Panc1 (cell line): ENCODE measurements at regions of chr3 and their contacts with region 1.

Region 1: DNA sequence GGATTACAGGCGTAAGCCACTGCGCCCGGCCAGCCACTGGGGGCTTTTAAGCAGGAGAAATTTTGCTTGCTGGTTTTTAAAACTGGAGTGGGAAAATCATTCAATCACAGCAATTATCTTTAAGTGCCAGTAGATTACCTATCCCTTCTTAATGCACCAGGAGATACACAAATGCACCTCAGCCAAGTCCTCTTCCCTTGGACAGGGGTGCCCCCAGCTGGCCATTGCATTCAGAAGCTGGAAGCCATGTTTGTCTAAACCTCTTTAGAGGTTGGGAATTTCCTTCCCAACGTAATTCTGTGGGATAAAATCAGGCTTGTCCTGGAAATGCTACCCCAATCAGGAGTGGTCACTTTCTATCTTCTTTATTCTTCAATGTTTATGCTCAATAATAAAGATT is 26.6 kb downstream of the MIX23 start:
- DNase-seq: peak; percentile 28
- ATAC-seq: peak; percentile 85
- H3K4me3 ChIP-seq: no peak overlapping the region
- H3K27ac ChIP-seq: no peak overlapping the region
- H3K4me1 ChIP-seq: no peaks in the 10 kb centered on the region
- H3K27me3 ChIP-seq: no peaks in the 10 kb centered on the region
- CTCF ChIP-seq: peak; percentile 80

Region 2: DNA sequence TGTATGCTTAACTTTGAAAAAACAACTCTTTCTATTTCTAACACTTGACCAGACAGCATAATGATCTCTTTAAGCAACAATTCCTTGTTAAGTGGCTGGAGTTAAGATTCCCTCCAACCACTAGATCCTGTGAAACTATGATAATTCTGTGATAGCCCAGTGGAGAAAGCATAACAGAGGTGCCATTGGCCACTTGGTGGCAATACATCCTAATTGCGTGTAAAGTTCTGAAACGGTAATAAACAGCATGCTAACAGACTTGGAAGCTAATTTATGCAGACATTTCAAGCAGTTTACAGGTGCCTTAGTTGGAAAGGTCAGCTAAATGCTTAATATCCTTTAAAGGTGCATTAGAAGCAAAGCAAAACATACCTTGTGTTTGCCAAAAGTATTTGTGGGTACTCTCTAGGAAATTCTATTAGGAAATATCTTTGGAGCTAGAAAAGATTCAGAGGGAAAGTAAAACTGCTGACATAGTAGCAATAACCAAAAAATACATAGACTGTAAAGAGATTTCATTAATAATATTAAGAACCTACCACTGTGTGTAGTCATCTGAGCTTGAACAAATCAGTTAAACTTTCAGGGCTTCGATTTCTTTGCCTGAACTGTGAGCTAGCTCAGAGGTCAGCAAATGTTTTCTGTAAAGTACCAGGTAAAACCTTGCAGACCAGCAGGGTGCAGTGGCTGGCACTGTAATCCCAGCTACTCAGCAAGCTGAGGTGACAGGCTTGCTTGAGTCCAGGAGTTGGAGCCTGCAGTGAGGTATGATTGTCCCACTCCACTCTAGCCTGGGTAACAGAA is 50.4 kb before region 1 on chr3:
- CTCF ChIA-PET with region 1: interaction called, 9 read pairs
- POLR2A ChIA-PET with region 1: no interaction called
- in situ Hi-C with region 1: no loop called
- intact Hi-C with region 1: loop called (anchors 2 kb)
- DNase-seq: peak; percentile 15
- ATAC-seq: peak; percentile 95
- H3K4me3 ChIP-seq: no peak overlapping the region; a peak in 1 of 4 replicates
- H3K27ac ChIP-seq: no peak overlapping the region
- H3K4me1 ChIP-seq: peaks cover 3% of the 10 kb centered on the region; the same call in 1 of the 2 replicates
- H3K27me3 ChIP-seq: no peaks in the 10 kb centered on the region; the same call in 1 of the 2 replicates
- CTCF ChIP-seq: peak; percentile 61

Region 3: GRCh38 chr3:122533931-122534334 is 177.5 kb after region 1 on chr3:
- CTCF ChIA-PET with region 1: no interaction called
- POLR2A ChIA-PET with region 1: no interaction called
- in situ Hi-C with region 1: no loop called
- intact Hi-C with region 1: no loop called
- DNase-seq: peak; percentile 76
- ATAC-seq: peak; percentile 100
- H3K4me3 ChIP-seq: no peak overlapping the region
- H3K27ac ChIP-seq: no peak overlapping the region
- H3K4me1 ChIP-seq: peaks cover 4% of the 10 kb centered on the region; the same call in 1 of the 2 replicates
- H3K27me3 ChIP-seq: no peaks in the 10 kb centered on the region
- CTCF ChIP-seq: no peak